Left ventricle myocardium inferior (tissue), 1 donor: ENCODE measurements at regions of chr1 and their contacts with region 1.

Region 1: DNA sequence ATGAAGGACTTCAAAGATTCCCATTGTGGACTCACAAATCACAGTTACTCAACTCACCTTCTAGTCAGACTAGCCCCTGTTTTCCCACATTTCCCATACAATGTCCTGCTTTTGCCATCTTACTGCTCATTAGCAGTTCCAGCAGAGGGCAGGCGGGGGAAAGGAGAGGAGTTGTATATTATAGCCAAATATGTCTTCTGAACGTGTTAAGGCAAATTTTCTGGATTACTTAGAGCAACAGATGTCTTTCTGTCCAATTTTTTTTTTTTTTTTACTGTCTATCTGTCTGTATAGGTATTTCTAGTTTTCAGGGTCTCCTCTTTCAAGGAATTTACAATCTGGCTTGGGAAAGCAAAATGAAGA is 29.9 kb upstream of the DDAH1 start:
- DNase-seq: no peak
- H3K4me3 ChIP-seq: no peak overlapping the region
- H3K27ac ChIP-seq: no peak overlapping the region
- H3K4me1 ChIP-seq: no peaks in the 10 kb centered on the region
- H3K27me3 ChIP-seq: no peaks in the 10 kb centered on the region
- CTCF ChIP-seq: peak; percentile 56

Region 2: GRCh38 chr1:84795966-84796600 is 698.8 kb before region 1 on chr1:
- intact Hi-C with region 1: no loop called
- DNase-seq: no peak
- H3K4me3 ChIP-seq: peak overlapping the region; percentile 45
- H3K27ac ChIP-seq: peak overlapping the region; percentile 7
- H3K4me1 ChIP-seq: peaks cover 10% of the 10 kb centered on the region
- H3K27me3 ChIP-seq: no peaks in the 10 kb centered on the region
- CTCF ChIP-seq: no peak

Region 3: GRCh38 chr1:85692730-85693314 is 197.9 kb after region 1 on chr1:
- intact Hi-C with region 1: loop called (anchors 5 kb)
- DNase-seq: no peak
- H3K4me3 ChIP-seq: no peak overlapping the region
- H3K27ac ChIP-seq: peak overlapping the region; percentile 50
- H3K4me1 ChIP-seq: peaks cover 26% of the 10 kb centered on the region
- H3K27me3 ChIP-seq: no peaks in the 10 kb centered on the region
- CTCF ChIP-seq: peak; percentile 67